Activated CD4-positive, alpha-beta T cell treated with anti-CD3 and anti-CD28 coated beads for 36 hours (primary cell): ENCODE measurements at regions of chr1 and their contacts with region 1.

Region 1: DNA sequence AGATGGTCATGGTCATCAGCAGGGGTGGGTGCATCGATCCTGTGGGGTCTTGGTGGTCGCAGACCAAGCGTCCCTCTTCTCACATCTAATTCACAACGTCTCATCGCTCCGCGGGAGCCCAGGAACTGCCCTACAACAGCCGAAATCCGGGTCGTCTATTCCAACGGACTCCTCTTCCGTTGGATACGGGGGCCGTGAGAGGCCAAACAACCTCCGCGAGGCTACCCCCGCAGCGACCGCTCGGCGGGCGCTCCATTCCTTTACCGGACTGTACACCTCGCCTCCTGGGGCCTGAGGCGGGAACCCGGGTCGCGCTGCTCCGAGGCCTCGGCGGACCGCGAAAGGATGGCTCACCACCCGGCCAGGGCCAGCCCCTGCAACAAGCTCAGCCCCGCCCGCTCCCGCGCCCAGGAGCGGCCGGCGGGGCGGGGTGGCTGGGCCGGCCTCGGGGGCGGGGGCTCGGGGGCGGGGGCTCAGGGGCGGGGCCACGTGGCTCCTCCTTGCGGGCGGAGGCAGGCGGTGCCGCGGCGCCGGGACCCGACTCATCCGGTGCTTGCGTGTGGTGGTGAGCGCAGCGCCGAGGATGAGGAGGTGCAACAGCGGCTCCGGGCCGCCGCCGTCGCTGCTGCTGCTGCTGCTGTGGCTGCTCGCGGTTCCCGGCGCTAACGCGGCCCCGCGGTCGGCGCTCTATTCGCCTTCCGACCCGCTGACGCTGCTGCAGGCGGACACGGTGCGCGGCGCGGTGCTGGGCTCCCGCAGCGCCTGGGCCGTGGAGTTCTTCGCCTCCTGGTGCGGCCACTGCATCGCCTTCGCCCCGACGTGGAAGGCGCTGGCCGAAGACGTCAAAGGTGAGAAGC is at the start of gene QSOX1:
- DNase-seq: peak; percentile 95
- ATAC-seq: peak; percentile 97
- H3K4me3 Mint-ChIP-seq: peak within 1 kb of the TSS; percentile 90
- H3K27ac Mint-ChIP-seq: peak within 1 kb of the TSS; percentile 85
- H3K4me1 Mint-ChIP-seq: peaks cover 25% of the 10 kb centered on the region
- H3K27me3 Mint-ChIP-seq: no peaks in the 10 kb centered on the region
- total RNA-seq, gene QSOX1: 18.3 to 31.6 TPM

Region 2: DNA sequence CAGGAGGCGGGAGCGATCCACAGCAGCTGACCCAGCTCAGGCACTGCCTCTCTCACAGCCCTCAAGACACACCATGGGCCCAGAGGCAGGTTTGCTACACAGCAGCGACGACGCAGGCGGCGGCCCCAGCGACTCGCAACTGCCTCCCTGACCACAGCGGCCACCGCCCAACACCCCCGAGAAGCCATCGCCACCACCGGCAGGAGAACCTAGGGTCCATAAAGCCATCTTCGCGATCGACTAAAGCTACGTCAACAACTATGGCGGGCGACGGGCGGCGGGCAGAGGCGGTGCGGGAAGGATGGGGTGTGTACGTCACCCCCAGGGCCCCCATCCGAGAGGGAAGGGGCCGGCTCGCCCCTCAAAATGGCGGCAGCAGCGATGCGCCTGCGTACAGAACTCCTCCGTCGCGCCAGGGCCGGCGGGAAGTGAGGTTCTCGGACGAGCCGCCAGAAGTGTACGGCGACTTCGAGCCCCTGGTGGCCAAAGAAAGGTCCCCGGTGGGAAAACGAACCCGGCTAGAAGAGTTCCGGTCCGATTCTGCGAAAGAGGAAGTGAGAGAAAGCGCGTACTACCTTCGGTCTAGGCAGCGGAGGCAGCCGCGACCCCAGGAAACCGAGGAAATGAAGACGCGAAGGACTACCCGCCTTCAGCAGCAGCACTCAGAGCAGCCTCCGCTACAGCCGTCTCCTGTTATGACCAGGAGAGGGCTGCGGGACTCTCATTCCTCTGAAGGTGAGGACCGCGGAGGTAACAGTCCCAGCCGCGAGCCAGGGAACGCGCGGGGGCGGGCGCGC is 272.1 kb before region 1 on chr1 and contains the start of gene TOR1AIP1:
- CTCF ChIA-PET with region 1: no interaction called
- POLR2A ChIA-PET with region 1: interaction called, 3 read pairs
- intact Hi-C with region 1: loop called (anchors 1 to 2 kb)
- DNase-seq: peak; percentile 98
- ATAC-seq: peak; percentile 80
- H3K4me3 Mint-ChIP-seq: peak within 1 kb of the TSS; percentile 87
- H3K27ac Mint-ChIP-seq: peak within 1 kb of the TSS; percentile 98
- H3K4me1 Mint-ChIP-seq: peaks cover 59% of the 10 kb centered on the region
- H3K27me3 Mint-ChIP-seq: no peaks in the 10 kb centered on the region
- total RNA-seq, gene TOR1AIP1: 50.1 to 71.6 TPM

Region 3: DNA sequence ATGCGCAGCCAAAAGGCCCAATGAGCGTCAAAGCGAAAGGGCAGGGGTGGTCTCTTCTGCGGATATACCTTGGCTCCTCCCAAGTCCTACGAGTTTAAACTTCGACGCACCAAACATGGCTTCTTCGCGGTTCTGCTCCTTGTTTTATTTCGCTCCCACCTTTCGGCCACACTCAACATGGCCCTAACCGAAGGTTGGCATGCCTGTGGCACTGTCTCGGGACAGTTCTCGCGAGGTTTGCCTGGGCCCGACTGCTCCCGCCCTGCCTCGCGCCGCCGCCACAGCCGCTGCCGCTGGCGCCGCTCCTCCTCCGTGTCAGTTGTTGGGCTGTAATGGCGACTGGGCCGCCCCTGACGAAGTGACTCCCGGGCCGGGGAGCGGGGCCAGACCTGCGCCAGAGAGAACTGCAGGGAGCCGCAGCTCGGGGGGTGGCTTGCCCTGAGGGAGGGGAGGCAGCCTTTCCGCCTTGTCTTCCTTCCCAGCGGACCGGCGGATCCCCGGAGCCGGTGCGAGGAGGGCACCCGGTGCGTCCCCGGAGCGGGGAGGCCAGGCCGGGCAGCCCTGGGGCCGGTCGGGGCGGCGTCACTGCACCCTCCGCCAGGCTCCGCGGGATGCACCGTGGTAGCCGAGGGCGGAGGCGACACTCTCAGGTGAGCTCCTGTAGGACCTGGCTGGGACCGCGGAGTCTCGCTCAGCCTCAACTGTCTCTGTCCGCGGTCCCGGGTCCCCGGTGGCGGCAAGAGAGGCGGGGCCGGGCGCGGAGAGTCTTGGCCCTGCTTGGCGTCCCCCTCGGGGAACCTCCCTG is 199.9 kb before region 1 on chr1 and contains the start of gene CEP350:
- CTCF ChIA-PET with region 1: no interaction called
- POLR2A ChIA-PET with region 1: interaction called, 4 read pairs
- intact Hi-C with region 1: loop called (anchors 1 kb)
- DNase-seq: peak; percentile 99
- ATAC-seq: peak; percentile 94
- H3K4me3 Mint-ChIP-seq: peak within 1 kb of the TSS; percentile 82
- H3K27ac Mint-ChIP-seq: peak within 1 kb of the TSS; percentile 98
- H3K4me1 Mint-ChIP-seq: peaks cover 47% of the 10 kb centered on the region
- H3K27me3 Mint-ChIP-seq: no peaks in the 10 kb centered on the region
- total RNA-seq, gene CEP350: 38.2 to 42.1 TPM

Region 4: DNA sequence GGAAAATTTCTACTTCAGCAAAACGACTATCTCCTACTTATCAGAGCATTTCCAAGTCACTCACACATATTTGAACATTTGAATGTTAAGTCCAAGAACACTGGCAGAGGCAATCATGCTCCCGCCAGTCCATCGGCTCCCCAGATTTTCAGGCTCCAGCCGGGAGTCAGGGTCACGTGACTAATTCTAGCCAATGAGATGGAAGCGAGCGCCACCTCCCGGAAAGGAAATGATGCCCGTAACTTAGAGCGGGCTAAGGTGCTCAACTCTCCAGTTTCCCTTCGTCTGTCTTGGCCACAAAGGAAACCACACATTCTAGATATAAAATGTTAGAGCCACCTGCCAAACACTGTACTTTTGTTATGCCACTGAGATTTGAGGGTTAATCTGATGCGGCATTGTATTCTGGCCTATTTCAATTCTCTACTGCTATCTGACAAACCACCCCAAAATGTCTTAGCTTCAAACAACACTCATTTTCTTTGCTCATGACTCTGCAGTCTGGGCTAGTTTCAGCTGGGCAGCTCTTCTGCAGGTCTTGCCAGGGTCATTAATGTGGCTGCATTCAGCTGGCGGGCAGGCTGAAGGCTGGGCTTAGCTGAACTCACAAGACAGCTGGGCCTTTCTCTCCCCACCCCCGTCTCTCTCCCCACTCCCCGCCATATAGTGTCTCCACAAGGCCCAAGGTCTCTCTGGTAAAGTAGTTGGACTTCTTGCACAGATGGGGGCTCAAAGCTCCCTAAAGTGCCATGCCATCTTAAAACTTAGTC is 59.0 kb after region 1 on chr1:
- CTCF ChIA-PET with region 1: no interaction called
- POLR2A ChIA-PET with region 1: no interaction called
- intact Hi-C with region 1: loop called in 1 of 2 experiments (anchors 2 kb)
- DNase-seq: peak; percentile 78
- ATAC-seq: peak; percentile 88
- H3K4me3 Mint-ChIP-seq: peak overlapping the region; percentile 20
- H3K27ac Mint-ChIP-seq: peak overlapping the region; percentile 61
- H3K4me1 Mint-ChIP-seq: peaks cover 18% of the 10 kb centered on the region
- H3K27me3 Mint-ChIP-seq: peaks cover 3% of the 10 kb centered on the region

Region 5: GRCh38 chr1:180821970-180822369 is 667.4 kb after region 1 on chr1:
- CTCF ChIA-PET with region 1: no interaction called
- POLR2A ChIA-PET with region 1: no interaction called
- intact Hi-C with region 1: no loop called
- DNase-seq: no peak
- ATAC-seq: no peak
- H3K4me3 Mint-ChIP-seq: no peak overlapping the region
- H3K27ac Mint-ChIP-seq: no peak overlapping the region
- H3K4me1 Mint-ChIP-seq: no peaks in the 10 kb centered on the region
- H3K27me3 Mint-ChIP-seq: no peaks in the 10 kb centered on the region